Mammary epithelial cell (primary cell): ENCODE measurements at regions of chr3 and their contacts with region 1.

Region 1: GRCh38 chr3:42831321-42831713 is 22.1 kb downstream of the ACKR2 start:
- DNase-seq: peak; percentile 56
- H3K4me3 ChIP-seq: no peak overlapping the region
- H3K27ac ChIP-seq: no peak overlapping the region
- H3K4me1 ChIP-seq: peaks cover 30% of the 10 kb centered on the region
- H3K27me3 ChIP-seq: no peaks in the 10 kb centered on the region
- CTCF ChIP-seq: peak; percentile 80 to 86

Region 2: GRCh38 chr3:42229942-42230688 is 601.2 kb before region 1 on chr3:
- CTCF ChIA-PET with region 1: no interaction called
- dilution Hi-C with region 1: no loop called
- in situ Hi-C with region 1: no loop called
- intact Hi-C with region 1: loop called (anchors 1 kb)
- DNase-seq: peak; percentile 45
- H3K4me3 ChIP-seq: no peak overlapping the region
- H3K27ac ChIP-seq: no peak overlapping the region
- H3K4me1 ChIP-seq: peaks cover 9% of the 10 kb centered on the region
- H3K27me3 ChIP-seq: no peaks in the 10 kb centered on the region
- CTCF ChIP-seq: peak; percentile 51 to 65

Region 3: DNA sequence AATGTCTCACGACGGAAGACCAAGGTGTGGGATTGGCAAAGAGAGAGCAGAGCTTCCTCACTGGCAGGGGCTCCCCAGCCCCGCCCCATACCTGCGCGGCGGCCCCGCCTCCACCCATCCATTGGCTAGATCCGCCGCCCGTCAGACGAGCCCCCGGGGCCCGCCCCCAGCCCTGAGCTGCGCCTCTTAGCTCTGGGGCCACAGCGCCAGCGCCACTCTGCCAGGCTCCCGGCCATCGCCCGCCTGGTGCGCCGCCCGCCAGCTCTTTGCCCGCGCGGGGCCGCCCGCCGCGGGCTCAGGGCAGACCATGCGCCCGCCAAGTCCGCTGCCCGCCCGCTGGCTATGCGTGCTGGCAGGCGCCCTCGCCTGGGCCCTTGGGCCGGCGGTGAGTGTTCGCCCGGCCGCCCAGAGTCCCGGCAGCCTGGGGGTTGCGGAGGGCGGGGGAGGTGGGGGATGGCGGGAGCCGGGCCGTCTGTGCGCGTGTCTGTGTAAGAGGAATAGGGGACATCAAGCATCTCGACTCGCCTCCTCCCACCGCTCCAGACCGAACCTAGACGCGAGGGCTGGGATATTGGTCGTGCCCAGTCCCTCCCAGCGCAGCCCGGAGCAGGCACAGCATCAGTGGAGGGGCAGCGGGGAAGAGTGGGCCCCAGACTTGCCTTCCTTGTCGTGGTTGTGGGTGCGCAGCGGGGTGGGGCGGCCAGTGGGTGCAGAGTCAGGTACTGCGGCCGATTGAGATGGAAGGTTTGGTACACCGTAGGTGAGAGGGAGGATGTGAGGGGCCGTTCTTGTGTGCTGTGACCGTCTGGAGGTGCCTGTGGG is 328.7 kb before region 1 on chr3 and contains the start of gene VIPR1:
- CTCF ChIA-PET with region 1: no interaction called
- dilution Hi-C with region 1: no loop called
- in situ Hi-C with region 1: no loop called
- intact Hi-C with region 1: loop called (anchors 2 kb)
- DNase-seq: peak; percentile 80
- H3K4me3 ChIP-seq: peak within 1 kb of the TSS; percentile 34 to 68 (median 46)
- H3K27ac ChIP-seq: no peak within 1 kb of the TSS
- H3K4me1 ChIP-seq: peaks cover 14% of the 10 kb centered on the region
- H3K27me3 ChIP-seq: no peaks in the 10 kb centered on the region
- CTCF ChIP-seq: no peak
- total RNA-seq, gene VIPR1: 4.7 to 21.3 TPM

Region 4: GRCh38 chr3:42539869-42540714 is 291.2 kb before region 1 on chr3:
- CTCF ChIA-PET with region 1: no interaction called
- dilution Hi-C with region 1: no loop called
- in situ Hi-C with region 1: no loop called
- intact Hi-C with region 1: loop called (anchors 1 kb)
- DNase-seq: peak; percentile 24
- H3K4me3 ChIP-seq: no peak overlapping the region
- H3K27ac ChIP-seq: no peak overlapping the region
- H3K4me1 ChIP-seq: no peaks in the 10 kb centered on the region
- H3K27me3 ChIP-seq: no peaks in the 10 kb centered on the region
- CTCF ChIP-seq: peak; percentile 60 to 87

Region 5: GRCh38 chr3:42780892-42781700 is 50.2 kb before region 1 on chr3:
- CTCF ChIA-PET with region 1: no interaction called
- dilution Hi-C with region 1: no loop called
- in situ Hi-C with region 1: loop called (anchors 5 kb)
- intact Hi-C with region 1: loop called (anchors 1 kb)
- DNase-seq: peak; percentile 43
- H3K4me3 ChIP-seq: no peak overlapping the region
- H3K27ac ChIP-seq: no peak overlapping the region
- H3K4me1 ChIP-seq: peaks cover 11% of the 10 kb centered on the region
- H3K27me3 ChIP-seq: no peaks in the 10 kb centered on the region
- CTCF ChIP-seq: peak; percentile 63 to 65

Region 6: DNA sequence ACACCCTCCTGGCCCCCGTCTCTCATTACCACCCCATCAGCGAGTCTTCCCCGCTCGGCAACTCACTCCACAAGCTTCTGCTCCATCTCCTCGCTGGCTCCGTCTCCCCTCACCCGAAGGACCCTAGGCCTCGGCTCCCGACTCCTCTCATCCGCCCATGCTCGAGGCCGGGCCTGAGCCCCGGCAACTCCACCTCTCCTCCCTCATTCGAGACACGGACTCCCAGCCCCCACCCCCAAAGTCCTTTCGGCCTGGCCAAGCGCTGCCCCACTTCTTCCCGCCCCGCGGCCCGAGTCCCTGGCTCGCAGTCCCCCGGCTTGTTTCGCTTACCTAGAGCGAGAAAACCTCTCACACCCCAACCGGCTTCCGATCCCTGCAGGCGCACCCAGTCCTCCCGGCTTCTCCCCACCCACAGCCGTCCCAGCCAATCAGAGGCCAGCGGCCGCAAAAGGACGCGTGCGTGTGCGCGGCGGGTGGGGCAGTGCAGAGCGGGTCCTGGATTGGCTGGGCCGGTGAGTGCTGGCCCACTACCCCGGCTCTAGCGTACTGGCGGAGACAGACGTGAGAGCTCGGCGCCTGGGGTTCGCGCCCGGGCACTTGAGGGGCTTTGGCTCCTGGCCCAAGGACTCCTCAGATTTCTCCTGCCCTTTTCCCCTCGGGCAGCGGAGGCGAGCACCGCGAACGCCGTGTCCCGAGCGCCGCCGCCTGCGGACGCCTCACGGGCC is 27.0 kb before region 1 on chr3 and contains the start of gene HIGD1A:
- CTCF ChIA-PET with region 1: no interaction called
- dilution Hi-C with region 1: no loop called
- in situ Hi-C with region 1: no loop called
- intact Hi-C with region 1: loop called (anchors 2 kb)
- DNase-seq: peak; percentile 98
- H3K4me3 ChIP-seq: peak within 1 kb of the TSS; percentile 86 to 94 (median 86)
- H3K27ac ChIP-seq: peak within 1 kb of the TSS; percentile 93
- H3K4me1 ChIP-seq: peaks cover 14% of the 10 kb centered on the region
- H3K27me3 ChIP-seq: no peaks in the 10 kb centered on the region
- CTCF ChIP-seq: no peak
- total RNA-seq, gene HIGD1A: 139 to 165 TPM

Region 7: GRCh38 chr3:42880601-42881451 is 49.5 kb after region 1 on chr3:
- CTCF ChIA-PET with region 1: no interaction called
- dilution Hi-C with region 1: no loop called
- in situ Hi-C with region 1: no loop called
- intact Hi-C with region 1: loop called (anchors 1 kb)
- DNase-seq: peak; percentile 72
- H3K4me3 ChIP-seq: peak overlapping the region; percentile 59 to 71 (median 63)
- H3K27ac ChIP-seq: no peak overlapping the region
- H3K4me1 ChIP-seq: peaks cover 10% of the 10 kb centered on the region
- H3K27me3 ChIP-seq: no peaks in the 10 kb centered on the region
- CTCF ChIP-seq: peak; percentile 72 to 91